ENCODE measurements at regions of chr1 and their contacts with region 1.

Region 1: DNA sequence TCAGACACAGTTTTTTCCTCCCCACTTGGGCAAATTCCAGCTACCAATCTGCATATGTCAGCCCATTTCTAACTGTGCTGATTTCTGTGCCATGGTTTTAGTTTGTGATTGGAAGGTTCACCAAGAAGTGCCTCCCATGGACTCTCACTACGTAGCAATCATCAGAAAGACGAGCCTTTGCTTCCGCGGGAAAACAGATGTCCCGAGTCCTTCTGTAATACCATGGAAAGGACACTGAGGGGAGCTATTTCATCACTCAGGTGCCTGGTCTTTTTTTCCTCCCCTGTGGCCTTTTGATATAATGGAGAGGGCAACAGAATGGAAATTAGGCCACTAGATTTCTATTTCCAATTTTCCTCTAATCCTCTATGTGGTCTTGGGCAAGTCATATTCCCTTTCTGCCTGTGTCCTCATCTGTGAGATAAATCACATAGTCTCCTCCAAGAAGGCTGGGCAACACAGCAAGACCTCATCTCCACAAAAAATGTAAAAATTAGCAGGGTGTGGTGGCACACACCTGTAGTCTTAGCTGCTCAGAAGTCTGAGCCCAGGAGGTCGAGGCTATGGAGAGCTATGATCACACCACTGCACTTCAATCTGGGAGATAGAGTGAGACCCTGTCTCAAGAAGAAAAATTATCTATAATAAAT is 24.8 kb downstream of the LEMD1 start:
- DNase-seq: peak; percentile 87
- H3K4me3 Mint-ChIP-seq: no peak overlapping the region
- H3K27ac Mint-ChIP-seq: no peak overlapping the region
- H3K4me1 Mint-ChIP-seq: peaks cover 4% of the 10 kb centered on the region
- H3K27me3 Mint-ChIP-seq: peaks cover 27% of the 10 kb centered on the region
- CTCF ChIP-seq: peak; percentile 99

Region 2: DNA sequence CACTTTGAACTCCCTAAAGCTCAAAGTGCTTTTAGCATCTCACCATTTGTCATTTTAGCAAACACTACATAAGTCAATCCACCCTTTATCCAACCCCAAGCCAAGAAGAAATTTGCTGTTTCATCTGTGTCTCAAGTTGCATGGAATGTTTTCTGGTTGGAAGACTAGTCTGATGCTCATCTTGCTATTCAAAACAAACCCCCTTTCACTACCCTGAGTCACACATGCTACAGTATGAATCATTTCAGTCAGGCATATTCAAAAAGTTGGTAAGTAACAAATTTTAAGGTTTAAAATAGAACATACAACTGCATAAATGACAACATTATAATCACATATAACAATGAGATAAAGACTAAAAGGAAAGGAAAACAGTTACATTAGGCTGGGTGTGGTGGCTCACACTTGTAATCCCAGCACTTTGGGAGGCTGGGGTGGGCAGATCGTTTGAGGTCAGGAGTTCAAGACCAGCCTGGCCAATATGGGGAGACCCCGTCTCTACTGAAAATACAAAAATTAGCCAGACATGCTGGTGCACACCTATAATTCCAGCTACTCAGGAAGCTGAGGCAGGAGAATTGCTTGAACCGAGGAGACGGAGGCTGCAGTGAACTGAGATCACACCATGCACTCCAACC is 224.2 kb before region 1 on chr1:
- CTCF ChIA-PET with region 1: no interaction called
- POLR2A ChIA-PET with region 1: no interaction called
- intact Hi-C with region 1: no loop called
- DNase-seq: peak; percentile 93
- H3K4me3 Mint-ChIP-seq: no peak overlapping the region
- H3K27ac Mint-ChIP-seq: peak overlapping the region; percentile 95
- H3K4me1 Mint-ChIP-seq: peaks cover 15% of the 10 kb centered on the region
- H3K27me3 Mint-ChIP-seq: no peaks in the 10 kb centered on the region
- CTCF ChIP-seq: no peak

Region 3: GRCh38 chr1:205273551-205273982 is 123.5 kb before region 1 on chr1:
- CTCF ChIA-PET with region 1: interaction called, 10 read pairs
- POLR2A ChIA-PET with region 1: interaction called, 3 read pairs
- intact Hi-C with region 1: no loop called
- DNase-seq: peak; percentile 93
- H3K4me3 Mint-ChIP-seq: no peak overlapping the region
- H3K27ac Mint-ChIP-seq: no peak overlapping the region
- H3K4me1 Mint-ChIP-seq: peaks cover 27% of the 10 kb centered on the region
- H3K27me3 Mint-ChIP-seq: peaks cover 9% of the 10 kb centered on the region
- CTCF ChIP-seq: peak; percentile 100

Region 4: GRCh38 chr1:205375835-205376545 is 21.1 kb before region 1 on chr1:
- CTCF ChIA-PET with region 1: interaction called, 10 read pairs
- POLR2A ChIA-PET with region 1: no interaction called
- intact Hi-C with region 1: no loop called
- DNase-seq: peak; percentile 90
- H3K4me3 Mint-ChIP-seq: no peak overlapping the region
- H3K27ac Mint-ChIP-seq: no peak overlapping the region
- H3K4me1 Mint-ChIP-seq: peaks cover 36% of the 10 kb centered on the region
- H3K27me3 Mint-ChIP-seq: no peaks in the 10 kb centered on the region
- CTCF ChIP-seq: no peak

Region 5: DNA sequence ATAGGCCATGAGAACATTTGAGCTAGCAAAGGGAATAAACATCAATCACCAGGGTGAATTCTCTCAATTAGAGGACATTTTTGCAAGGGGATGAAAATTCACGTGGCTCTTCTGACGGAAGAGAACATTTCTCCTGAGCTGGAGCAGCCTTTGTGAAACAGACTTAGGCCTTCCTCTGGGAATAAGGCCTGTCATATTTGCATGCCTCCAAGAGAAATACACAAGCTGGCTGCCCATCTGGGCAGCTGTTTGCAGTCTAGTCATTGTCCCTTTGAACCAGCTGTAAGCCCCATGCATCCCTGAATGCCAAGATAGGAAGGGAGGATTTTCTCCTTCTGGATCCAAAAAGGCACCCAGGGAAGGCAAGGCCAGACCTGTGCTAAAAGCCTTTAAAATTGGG is 19.2 kb after region 1 on chr1:
- CTCF ChIA-PET with region 1: interaction called, 13 read pairs
- POLR2A ChIA-PET with region 1: interaction called, 3 read pairs
- intact Hi-C with region 1: no loop called
- DNase-seq: no peak
- H3K4me3 Mint-ChIP-seq: no peak overlapping the region
- H3K27ac Mint-ChIP-seq: no peak overlapping the region
- H3K4me1 Mint-ChIP-seq: no peaks in the 10 kb centered on the region
- H3K27me3 Mint-ChIP-seq: peaks cover 40% of the 10 kb centered on the region
- CTCF ChIP-seq: no peak

Region 6: GRCh38 chr1:205449750-205450443 is 52.8 kb after region 1 on chr1:
- CTCF ChIA-PET with region 1: interaction called, 11 read pairs
- POLR2A ChIA-PET with region 1: interaction called, 4 read pairs
- intact Hi-C with region 1: no loop called
- DNase-seq: peak; percentile 93
- H3K4me3 Mint-ChIP-seq: peak overlapping the region; percentile 89
- H3K27ac Mint-ChIP-seq: peak overlapping the region; percentile 98
- H3K4me1 Mint-ChIP-seq: peaks cover 36% of the 10 kb centered on the region
- H3K27me3 Mint-ChIP-seq: peaks cover 40% of the 10 kb centered on the region
- CTCF ChIP-seq: peak; percentile 25

Region 7: DNA sequence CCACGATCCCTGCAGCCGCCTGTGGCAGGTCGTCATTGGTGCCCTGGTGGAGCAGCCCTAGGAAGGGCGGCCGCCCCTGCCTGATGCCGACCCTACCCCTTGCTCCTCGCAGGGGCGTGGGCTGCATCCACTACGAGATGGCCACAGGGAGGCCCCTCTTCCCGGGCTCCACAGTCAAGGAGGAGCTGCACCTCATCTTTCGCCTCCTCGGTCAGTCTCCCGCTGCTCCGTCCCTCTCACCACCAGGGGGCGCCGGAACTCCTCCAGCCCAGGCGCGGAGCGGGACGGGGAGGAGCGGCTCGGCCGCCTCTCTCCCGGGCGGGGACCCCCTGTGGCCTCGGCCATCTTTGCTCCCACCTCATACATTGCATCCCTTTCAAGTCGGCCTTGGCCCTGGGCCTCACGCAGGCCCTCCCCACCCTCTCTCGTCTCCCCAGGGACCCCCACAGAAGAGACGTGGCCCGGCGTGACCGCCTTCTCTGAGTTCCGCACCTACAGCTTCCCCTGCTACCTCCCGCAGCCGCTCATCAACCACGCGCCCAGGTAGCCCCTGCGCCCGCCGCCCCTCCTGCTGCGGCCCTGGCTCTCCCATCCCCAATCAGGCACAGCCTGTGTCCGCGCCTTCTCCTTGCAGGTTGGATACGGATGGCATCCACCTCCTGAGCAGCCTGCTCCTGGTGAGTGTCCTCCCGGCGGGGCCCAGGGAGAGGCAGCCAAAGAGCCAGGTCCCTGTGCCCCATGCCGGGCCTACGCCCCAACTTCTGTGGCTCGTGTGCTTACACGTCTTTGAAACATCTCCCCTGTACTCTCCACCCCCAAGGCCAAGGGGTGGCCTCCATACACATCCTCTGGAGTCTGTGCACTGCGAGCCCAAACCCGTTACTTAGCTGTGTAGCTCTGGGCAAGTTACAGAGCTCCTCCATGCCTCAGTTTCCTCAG is 132.1 kb after region 1 on chr1:
- CTCF ChIA-PET with region 1: interaction called, 130 read pairs
- POLR2A ChIA-PET with region 1: interaction called, 21 read pairs
- intact Hi-C with region 1: loop called (anchors 1 kb)
- DNase-seq: peak; percentile 89
- H3K4me3 Mint-ChIP-seq: peak overlapping the region; percentile 32
- H3K27ac Mint-ChIP-seq: no peak overlapping the region
- H3K4me1 Mint-ChIP-seq: peaks cover 6% of the 10 kb centered on the region
- H3K27me3 Mint-ChIP-seq: no peaks in the 10 kb centered on the region
- CTCF ChIP-seq: peak; percentile 100

Measured in MCF 10A (cell line).